ENCODE measurements at regions of chr18 and their contacts with region 1.

Region 1: GRCh38 chr18:13289481-13290205 is 71.1 kb downstream of the LDLRAD4 start:
- DNase-seq: no peak
- H3K4me3 Mint-ChIP-seq: no peak overlapping the region
- H3K27ac Mint-ChIP-seq: peak overlapping the region; percentile 67
- H3K4me1 Mint-ChIP-seq: peaks cover 66% of the 10 kb centered on the region
- H3K27me3 Mint-ChIP-seq: peaks cover 3% of the 10 kb centered on the region

Region 2: GRCh38 chr18:13279181-13280069 is 10.2 kb before region 1 on chr18:
- intact Hi-C with region 1: loop called (anchors 1 kb)
- DNase-seq: no peak
- H3K4me3 Mint-ChIP-seq: peak overlapping the region; percentile 70
- H3K27ac Mint-ChIP-seq: peak overlapping the region; percentile 75
- H3K4me1 Mint-ChIP-seq: peaks cover 83% of the 10 kb centered on the region
- H3K27me3 Mint-ChIP-seq: no peaks in the 10 kb centered on the region